Activated CD8-positive, alpha-beta T cell treated with anti-CD3 and anti-CD28 coated beads for 36 hours (primary cell): ENCODE measurements at regions of chr17 and their contacts with region 1.

Region 1: DNA sequence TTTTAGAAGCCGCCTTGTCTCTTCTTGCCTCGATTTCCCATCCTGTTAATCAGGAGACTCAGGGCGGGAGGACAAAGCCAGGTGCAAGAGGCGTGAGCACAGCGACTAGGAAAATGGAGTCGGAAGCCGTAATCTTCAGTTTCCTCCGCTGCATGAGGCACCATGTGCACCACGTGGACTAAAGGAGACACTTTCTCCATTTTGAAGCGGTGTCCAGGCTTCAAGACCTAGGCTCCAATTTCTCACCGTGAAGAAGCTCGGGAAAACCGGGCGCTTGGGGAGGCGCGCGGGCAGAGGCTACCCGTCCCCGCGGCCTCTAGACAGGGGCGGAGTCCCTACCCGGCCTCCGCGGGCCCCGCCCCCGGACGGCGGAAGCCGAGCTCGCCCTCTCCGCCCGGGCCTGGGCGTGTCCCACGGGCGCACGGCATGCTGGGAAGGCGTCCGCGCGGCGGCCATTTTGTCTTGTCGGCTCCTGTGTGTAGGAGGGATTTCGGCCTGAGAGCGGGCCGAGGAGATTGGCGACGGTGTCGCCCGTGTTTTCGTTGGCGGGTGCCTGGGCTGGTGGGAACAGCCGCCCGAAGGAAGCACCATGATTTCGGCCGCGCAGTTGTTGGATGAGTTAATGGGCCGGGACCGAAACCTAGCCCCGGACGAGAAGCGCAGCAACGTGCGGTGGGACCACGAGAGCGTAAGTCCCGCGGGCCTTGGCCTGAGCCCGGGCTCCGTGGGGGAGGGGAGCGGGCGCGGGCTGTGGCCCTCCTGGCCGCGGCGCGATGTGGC is at the start of gene LUC7L3:
- DNase-seq: peak; percentile 94
- ATAC-seq: peak; percentile 94
- H3K4me3 Mint-ChIP-seq: peak within 1 kb of the TSS; percentile 85
- H3K27ac Mint-ChIP-seq: peak within 1 kb of the TSS; percentile 99
- H3K4me1 Mint-ChIP-seq: peaks cover 19% of the 10 kb centered on the region
- H3K27me3 Mint-ChIP-seq: no peaks in the 10 kb centered on the region
- CTCF ChIP-seq: no peak
- total RNA-seq, gene LUC7L3: 148 to 160 TPM

Region 2: GRCh38 chr17:50707289-50708049 is 11.9 kb before region 1 on chr17 and contains the start of gene ANKRD40:
- CTCF ChIA-PET with region 1: interaction called, 4 read pairs
- POLR2A ChIA-PET with region 1: interaction called, 32 read pairs
- intact Hi-C with region 1: loop called (anchors 2 kb)
- DNase-seq: peak; percentile 92
- ATAC-seq: peak; percentile 87
- H3K4me3 Mint-ChIP-seq: peak within 1 kb of the TSS; percentile 95
- H3K27ac Mint-ChIP-seq: peak within 1 kb of the TSS; percentile 94
- H3K4me1 Mint-ChIP-seq: peaks cover 40% of the 10 kb centered on the region
- H3K27me3 Mint-ChIP-seq: no peaks in the 10 kb centered on the region
- CTCF ChIP-seq: no peak
- total RNA-seq, gene ANKRD40: 26.3 to 27.3 TPM